CD14-positive monocyte (primary cell): ENCODE measurements at regions of chr20 and their contacts with region 1.

Region 1: GRCh38 chr20:44664131-44664530 is 12.6 kb upstream of the ADA start:
- DNase-seq: peak; percentile 88 to 97 (median 93)
- H3K4me3 ChIP-seq: peak overlapping the region in 1 of 3 experiments; percentile 38
- H3K4me3 Mint-ChIP-seq: peak overlapping the region; percentile 28 to 64
- H3K27ac ChIP-seq: peak overlapping the region; percentile 67 to 87
- H3K27ac Mint-ChIP-seq: peak overlapping the region; percentile 81 to 94 (median 90)
- H3K4me1 ChIP-seq: peaks cover 17 to 24% of the 10 kb centered on the region in 2 donors
- H3K4me1 Mint-ChIP-seq: peaks cover 28% of the 10 kb centered on the region
- H3K27me3 ChIP-seq: no peaks in the 10 kb centered on the region
- H3K27me3 Mint-ChIP-seq: peaks cover 0 to 3% (median 0%) of the 10 kb centered on the region in 3 donors
- CTCF ChIP-seq: no peak

Region 2: DNA sequence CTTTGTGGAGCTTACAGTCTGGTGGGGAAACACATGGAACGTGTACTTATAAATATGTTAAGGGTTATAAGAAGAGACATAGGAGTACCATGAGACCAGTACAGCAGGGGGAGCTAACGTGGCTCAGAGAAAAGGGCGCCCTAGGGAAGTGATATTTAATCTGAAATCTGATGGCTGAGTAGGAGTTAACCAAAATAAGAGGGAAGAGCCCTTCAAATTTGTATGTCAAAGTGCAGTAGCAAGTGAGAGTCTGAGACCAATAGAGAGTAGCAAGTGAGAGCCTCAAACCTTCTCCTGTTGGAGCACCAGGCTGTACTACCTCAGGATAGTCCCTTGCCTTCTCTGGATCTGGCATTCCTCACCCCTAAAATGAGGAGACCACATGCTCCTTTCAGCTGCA is 87.8 kb before region 1 on chr20:
- intact Hi-C with region 1: loop called in 1 of 2 experiments (anchors 10 kb)
- DNase-seq: peak; percentile 48 to 65 (median 51)
- H3K4me3 ChIP-seq: peak overlapping the region in 1 of 3 experiments; percentile 5
- H3K4me3 Mint-ChIP-seq: peak overlapping the region in 1 of 2 donors; percentile 77
- H3K27ac ChIP-seq: peak overlapping the region in 1 of 2 donors; percentile 70
- H3K27ac Mint-ChIP-seq: peak overlapping the region; percentile 82 to 92 (median 89)
- H3K4me1 ChIP-seq: peaks cover 21 to 22% of the 10 kb centered on the region in 2 donors
- H3K4me1 Mint-ChIP-seq: peaks cover 39% of the 10 kb centered on the region
- H3K27me3 ChIP-seq: no peaks in the 10 kb centered on the region
- H3K27me3 Mint-ChIP-seq: peaks cover 0 to 3% (median 0%) of the 10 kb centered on the region in 3 donors
- CTCF ChIP-seq: peak; percentile 41